Caco-2 (cell line): ENCODE measurements at regions of chr12 and their contacts with region 1.

Region 1: DNA sequence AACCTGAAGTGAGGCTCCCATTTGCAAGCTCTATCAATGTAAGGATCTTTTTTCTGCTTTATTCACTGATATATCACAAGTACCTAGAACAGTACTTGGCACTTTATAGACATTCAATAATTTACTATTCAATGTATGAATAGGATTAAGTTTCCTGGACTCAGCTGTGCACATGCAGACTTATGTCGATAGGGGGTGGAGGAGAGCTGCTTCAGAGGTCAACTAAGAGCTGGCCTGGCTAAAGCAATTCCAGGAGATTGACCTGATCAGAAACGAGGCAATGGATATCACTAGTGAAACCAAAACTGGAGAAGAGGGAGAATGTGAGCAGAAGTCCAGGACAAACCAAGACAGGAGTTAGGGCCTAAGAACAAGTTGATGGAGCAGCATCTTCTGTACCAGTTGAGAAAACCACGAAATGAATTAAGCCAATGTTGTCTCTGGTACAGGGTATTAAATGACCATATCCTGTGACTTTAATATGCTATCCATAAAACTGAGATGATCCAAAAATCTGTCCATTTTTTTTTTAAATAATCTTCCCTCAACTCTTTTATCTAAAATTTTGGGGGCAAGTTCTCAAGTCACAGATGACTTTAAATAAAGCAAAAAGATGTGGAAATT is 169.2 kb downstream of the PIK3C2G start:
- DNase-seq: peak; percentile 62 to 78
- H3K4me3 ChIP-seq: no peak overlapping the region
- H3K4me3 Mint-ChIP-seq: no peak overlapping the region
- H3K27ac Mint-ChIP-seq: no peak overlapping the region
- H3K4me1 ChIP-seq: no peaks in the 10 kb centered on the region
- H3K4me1 Mint-ChIP-seq: no peaks in the 10 kb centered on the region
- H3K27me3 ChIP-seq: no peaks in the 10 kb centered on the region
- H3K27me3 Mint-ChIP-seq: no peaks in the 10 kb centered on the region
- CTCF ChIP-seq: peak; percentile 93 to 96

Region 2: DNA sequence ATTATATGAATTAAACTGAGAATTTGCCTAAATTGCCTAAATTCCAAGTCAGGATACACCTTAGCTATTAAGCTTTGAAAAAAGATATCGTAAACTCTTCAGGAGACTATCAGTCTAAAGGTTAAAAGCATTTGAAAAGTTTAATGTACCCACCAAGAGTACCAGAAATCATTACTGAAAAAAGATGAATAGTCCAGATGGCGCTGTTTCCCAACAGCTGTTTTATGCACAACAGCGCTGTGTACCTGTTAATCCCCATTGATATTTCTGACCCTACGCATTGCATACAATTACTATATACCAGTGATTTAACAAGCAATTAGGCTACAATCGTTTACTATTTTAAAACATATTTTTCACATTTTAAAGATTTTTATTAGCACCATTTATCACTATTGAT is 122.3 kb after region 1 on chr12:
- CTCF ChIA-PET with region 1: no interaction called
- POLR2A ChIA-PET with region 1: no interaction called
- intact Hi-C with region 1: loop called (anchors 5 kb)
- DNase-seq: no peak
- H3K4me3 ChIP-seq: no peak overlapping the region
- H3K4me3 Mint-ChIP-seq: no peak overlapping the region
- H3K27ac Mint-ChIP-seq: no peak overlapping the region
- H3K4me1 ChIP-seq: peaks cover 42% of the 10 kb centered on the region
- H3K4me1 Mint-ChIP-seq: peaks cover 17% of the 10 kb centered on the region
- H3K27me3 ChIP-seq: no peaks in the 10 kb centered on the region
- H3K27me3 Mint-ChIP-seq: peaks cover 10% of the 10 kb centered on the region
- CTCF ChIP-seq: peak in 1 of 2 experiments; percentile 27

Region 3: DNA sequence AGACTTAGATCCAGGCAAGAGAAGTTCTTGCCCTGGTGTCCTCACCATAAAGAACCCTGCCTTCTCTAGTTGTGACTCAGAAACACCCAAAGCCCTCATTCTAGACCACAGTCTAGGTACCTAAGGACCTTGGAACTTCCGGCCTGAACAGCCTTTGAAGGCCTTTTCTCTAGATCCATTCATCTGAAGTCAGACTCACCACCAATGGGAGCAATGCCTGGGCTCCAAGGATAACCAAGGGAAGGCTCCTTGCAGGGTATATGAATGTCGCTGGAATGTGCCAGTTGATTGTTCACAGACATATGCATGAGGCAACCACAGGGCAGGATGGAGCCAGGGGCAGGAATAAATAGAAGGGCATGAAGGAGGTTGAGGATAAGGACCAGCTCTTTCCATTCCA is 221.0 kb after region 1 on chr12:
- CTCF ChIA-PET with region 1: no interaction called
- POLR2A ChIA-PET with region 1: no interaction called
- intact Hi-C with region 1: no loop called
- DNase-seq: no peak
- H3K4me3 ChIP-seq: no peak overlapping the region
- H3K4me3 Mint-ChIP-seq: no peak overlapping the region
- H3K27ac Mint-ChIP-seq: no peak overlapping the region
- H3K4me1 ChIP-seq: peaks cover 4% of the 10 kb centered on the region; the same call in 1 of the 2 replicates
- H3K4me1 Mint-ChIP-seq: no peaks in the 10 kb centered on the region
- H3K27me3 ChIP-seq: no peaks in the 10 kb centered on the region
- H3K27me3 Mint-ChIP-seq: peaks cover 17% of the 10 kb centered on the region
- CTCF ChIP-seq: no peak

Region 4: GRCh38 chr12:18747895-18748294 is 317.4 kb after region 1 on chr12:
- CTCF ChIA-PET with region 1: no interaction called
- POLR2A ChIA-PET with region 1: no interaction called
- intact Hi-C with region 1: loop called (anchors 5 kb)
- DNase-seq: no peak
- H3K4me3 ChIP-seq: no peak overlapping the region
- H3K4me3 Mint-ChIP-seq: no peak overlapping the region
- H3K27ac Mint-ChIP-seq: no peak overlapping the region
- H3K4me1 ChIP-seq: peaks cover 4% of the 10 kb centered on the region; the same call in 1 of the 2 replicates
- H3K4me1 Mint-ChIP-seq: no peaks in the 10 kb centered on the region
- H3K27me3 ChIP-seq: no peaks in the 10 kb centered on the region
- H3K27me3 Mint-ChIP-seq: peaks cover 4% of the 10 kb centered on the region
- CTCF ChIP-seq: no peak

Region 5: DNA sequence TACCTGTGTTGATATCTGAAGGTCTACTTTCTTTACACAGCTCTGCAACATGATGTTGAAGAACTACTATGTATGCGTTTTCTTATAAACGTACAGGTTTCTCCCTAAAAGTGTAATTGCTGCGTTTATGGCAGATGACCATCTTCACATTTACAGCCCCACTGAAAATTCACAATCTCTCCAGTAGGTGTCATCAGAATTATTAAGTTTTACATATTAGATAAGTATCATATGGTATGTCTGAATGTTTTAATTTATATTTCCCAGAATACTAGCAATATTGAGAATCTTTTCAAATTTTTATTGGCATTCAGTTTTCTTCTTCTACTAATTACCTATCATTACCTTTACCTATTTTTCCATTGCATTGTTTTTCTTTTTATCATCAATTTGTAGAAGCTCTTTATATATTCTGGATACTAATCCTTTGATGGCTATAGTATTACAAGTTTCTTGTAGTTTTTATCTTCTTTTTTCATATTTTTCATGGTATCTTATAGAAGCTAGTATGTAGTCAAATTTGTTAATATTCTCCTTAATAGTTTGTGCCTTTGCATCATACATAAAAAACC is 430.8 kb after region 1 on chr12:
- CTCF ChIA-PET with region 1: no interaction called
- POLR2A ChIA-PET with region 1: no interaction called
- intact Hi-C with region 1: loop called (anchors 1 kb)
- DNase-seq: peak in 1 of 2 experiments; percentile 56
- H3K4me3 ChIP-seq: no peak overlapping the region
- H3K4me3 Mint-ChIP-seq: no peak overlapping the region
- H3K27ac Mint-ChIP-seq: no peak overlapping the region
- H3K4me1 ChIP-seq: no peaks in the 10 kb centered on the region
- H3K4me1 Mint-ChIP-seq: no peaks in the 10 kb centered on the region
- H3K27me3 ChIP-seq: no peaks in the 10 kb centered on the region; the same call in 1 of the 2 replicates
- H3K27me3 Mint-ChIP-seq: peaks cover 13% of the 10 kb centered on the region
- CTCF ChIP-seq: peak; percentile 66 to 92

Region 6: GRCh38 chr12:19158923-19159322 is 728.4 kb after region 1 on chr12:
- CTCF ChIA-PET with region 1: no interaction called
- POLR2A ChIA-PET with region 1: no interaction called
- intact Hi-C with region 1: no loop called
- DNase-seq: no peak
- H3K4me3 ChIP-seq: no peak overlapping the region
- H3K4me3 Mint-ChIP-seq: no peak overlapping the region
- H3K27ac Mint-ChIP-seq: no peak overlapping the region
- H3K4me1 ChIP-seq: no peaks in the 10 kb centered on the region; the same call in 1 of the 2 replicates
- H3K4me1 Mint-ChIP-seq: peaks cover 26% of the 10 kb centered on the region
- H3K27me3 ChIP-seq: no peaks in the 10 kb centered on the region
- H3K27me3 Mint-ChIP-seq: no peaks in the 10 kb centered on the region
- CTCF ChIP-seq: no peak

Region 7: DNA sequence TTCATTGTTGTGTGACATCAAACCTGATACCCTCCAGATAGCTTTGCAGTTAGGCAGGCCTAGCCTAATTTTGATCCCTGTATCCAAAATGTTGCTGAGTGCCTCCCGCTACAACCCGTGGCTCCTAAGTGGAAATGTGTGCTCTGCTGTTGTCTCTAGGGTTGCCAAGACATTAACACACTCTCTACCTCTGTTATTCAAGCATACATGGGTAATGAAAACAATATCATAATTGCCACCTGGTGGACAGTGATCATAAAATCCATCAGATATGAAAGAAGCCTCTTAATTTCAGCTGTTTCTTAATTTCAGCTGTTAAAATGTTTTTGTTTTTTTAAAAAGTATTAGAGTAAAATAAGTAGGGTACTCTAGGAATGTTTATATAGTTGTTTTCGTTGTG is 792.5 kb after region 1 on chr12:
- CTCF ChIA-PET with region 1: no interaction called
- POLR2A ChIA-PET with region 1: no interaction called
- intact Hi-C with region 1: loop called (anchors 2 kb)
- DNase-seq: no peak
- H3K4me3 ChIP-seq: no peak overlapping the region
- H3K4me3 Mint-ChIP-seq: no peak overlapping the region
- H3K27ac Mint-ChIP-seq: no peak overlapping the region
- H3K4me1 ChIP-seq: 0 out of 2 replicates have a peak, but pooled peaks cover 3% of the 10 kb centered on the region
- H3K4me1 Mint-ChIP-seq: peaks cover 13% of the 10 kb centered on the region
- H3K27me3 ChIP-seq: no peaks in the 10 kb centered on the region
- H3K27me3 Mint-ChIP-seq: no peaks in the 10 kb centered on the region
- CTCF ChIP-seq: peak; percentile 14 to 48